Activated CD8-positive, alpha-beta T cell treated with anti-CD3 and anti-CD28 coated beads, Interleukin-2, amount 10 ng/mL, durations not matched to agents 7 days and 5 days (primary cell): ENCODE measurements at regions of chr11 and their contacts with region 1.

Region 1: GRCh38 chr11:34357701-34358257 is at the start of gene ABTB2:
- DNase-seq: peak; percentile 99
- ATAC-seq: peak; percentile 91
- H3K4me3 Mint-ChIP-seq: peak within 1 kb of the TSS; percentile 78
- H3K27ac Mint-ChIP-seq: peak within 1 kb of the TSS; percentile 74
- H3K4me1 Mint-ChIP-seq: peaks cover 32% of the 10 kb centered on the region
- H3K27me3 Mint-ChIP-seq: peaks cover 44% of the 10 kb centered on the region
- total RNA-seq, gene ABTB2: 0.97 TPM

Region 2: GRCh38 chr11:33996498-33997454 is 361.0 kb before region 1 on chr11:
- CTCF ChIA-PET with region 1: interaction called, 11 read pairs
- POLR2A ChIA-PET with region 1: no interaction called
- DNase-seq: peak; percentile 85
- ATAC-seq: peak; percentile 98
- H3K4me3 Mint-ChIP-seq: no peak overlapping the region
- H3K27ac Mint-ChIP-seq: no peak overlapping the region
- H3K4me1 Mint-ChIP-seq: peaks cover 13% of the 10 kb centered on the region
- H3K27me3 Mint-ChIP-seq: peaks cover 23% of the 10 kb centered on the region

Region 3: DNA sequence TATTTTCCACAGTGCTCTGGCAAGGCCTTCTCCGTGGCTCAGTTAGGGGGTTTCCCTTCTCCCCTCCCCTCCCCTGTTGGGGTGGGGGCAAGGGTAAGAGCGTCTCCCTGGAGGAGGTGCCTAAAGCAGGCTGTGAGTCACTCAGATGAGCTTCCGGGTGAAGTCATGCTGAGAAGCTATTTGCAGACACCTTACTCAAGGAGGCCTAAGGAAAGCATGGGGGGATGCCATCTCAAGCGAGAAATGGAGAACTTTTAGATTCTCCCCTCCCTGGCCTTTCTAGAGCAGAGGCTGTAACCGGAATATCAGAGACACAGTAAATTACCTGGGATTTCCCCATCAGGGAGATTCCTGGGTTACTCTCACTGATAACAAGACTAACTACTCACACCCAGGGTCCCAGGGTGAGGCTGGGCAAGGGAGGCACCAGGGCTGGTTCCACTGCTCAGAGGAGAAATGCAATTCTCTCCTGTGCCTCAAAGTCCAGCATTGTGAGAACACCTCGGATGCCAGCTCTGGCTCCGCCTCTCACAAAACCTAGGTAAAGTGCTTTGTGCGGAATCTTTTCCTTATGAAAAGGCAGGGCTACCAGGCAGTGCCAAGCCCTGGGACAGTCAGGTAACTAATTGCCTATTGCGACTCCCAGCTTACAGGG is 123.6 kb before region 1 on chr11:
- CTCF ChIA-PET with region 1: interaction called, 10 read pairs
- POLR2A ChIA-PET with region 1: interaction called, 3 read pairs
- DNase-seq: peak; percentile 80
- ATAC-seq: peak; percentile 95
- H3K4me3 Mint-ChIP-seq: no peak overlapping the region
- H3K27ac Mint-ChIP-seq: peak overlapping the region; percentile 72
- H3K4me1 Mint-ChIP-seq: peaks cover 29% of the 10 kb centered on the region
- H3K27me3 Mint-ChIP-seq: no peaks in the 10 kb centered on the region

Region 4: DNA sequence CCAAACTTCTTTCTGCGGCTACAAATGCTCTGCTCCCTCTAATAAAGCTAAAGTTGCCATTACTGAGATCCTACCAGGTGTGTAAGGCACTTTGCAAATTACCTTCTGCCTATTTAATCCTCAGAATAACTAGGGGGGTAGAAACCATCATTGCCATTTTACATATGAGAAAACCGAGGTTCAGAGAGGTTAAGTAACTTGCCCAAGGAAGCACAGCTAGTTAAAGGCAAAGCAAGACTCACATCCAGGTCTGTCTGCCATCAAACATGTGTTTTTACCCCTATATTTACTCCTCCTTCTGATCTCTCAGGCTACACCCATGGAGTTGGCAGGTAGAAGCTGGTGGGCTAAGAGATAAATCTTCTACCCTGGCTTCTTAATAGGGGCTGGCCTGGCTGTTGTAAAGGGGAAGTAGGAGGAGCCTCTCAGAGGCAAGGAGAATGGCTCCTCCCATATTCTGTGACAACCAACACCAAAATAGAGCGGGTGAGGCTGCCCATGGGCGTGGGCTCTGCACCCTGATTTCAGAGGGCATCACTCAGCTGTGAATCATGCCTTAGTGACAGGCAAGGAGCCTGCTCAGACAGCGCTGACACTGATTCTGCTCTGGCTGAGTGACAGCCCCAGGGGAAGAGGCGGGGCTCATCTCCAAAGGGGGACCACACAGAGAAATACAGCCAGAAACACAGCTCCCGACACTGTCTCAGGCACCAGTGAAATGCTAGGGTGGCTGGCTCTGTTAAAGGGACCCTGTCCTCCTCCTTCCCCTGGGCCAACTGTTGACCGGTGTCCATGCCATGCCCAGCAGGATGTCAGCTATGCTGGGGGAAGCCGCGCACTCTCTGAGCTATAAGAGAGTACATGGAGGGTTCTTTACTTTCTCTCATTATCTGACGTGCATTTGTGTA is 106.8 kb before region 1 on chr11:
- CTCF ChIA-PET with region 1: interaction called, 15 read pairs
- POLR2A ChIA-PET with region 1: interaction called, 3 read pairs
- DNase-seq: peak; percentile 81
- ATAC-seq: peak; percentile 91
- H3K4me3 Mint-ChIP-seq: peak overlapping the region; percentile 25
- H3K27ac Mint-ChIP-seq: peak overlapping the region; percentile 78
- H3K4me1 Mint-ChIP-seq: peaks cover 59% of the 10 kb centered on the region
- H3K27me3 Mint-ChIP-seq: no peaks in the 10 kb centered on the region

Region 5: DNA sequence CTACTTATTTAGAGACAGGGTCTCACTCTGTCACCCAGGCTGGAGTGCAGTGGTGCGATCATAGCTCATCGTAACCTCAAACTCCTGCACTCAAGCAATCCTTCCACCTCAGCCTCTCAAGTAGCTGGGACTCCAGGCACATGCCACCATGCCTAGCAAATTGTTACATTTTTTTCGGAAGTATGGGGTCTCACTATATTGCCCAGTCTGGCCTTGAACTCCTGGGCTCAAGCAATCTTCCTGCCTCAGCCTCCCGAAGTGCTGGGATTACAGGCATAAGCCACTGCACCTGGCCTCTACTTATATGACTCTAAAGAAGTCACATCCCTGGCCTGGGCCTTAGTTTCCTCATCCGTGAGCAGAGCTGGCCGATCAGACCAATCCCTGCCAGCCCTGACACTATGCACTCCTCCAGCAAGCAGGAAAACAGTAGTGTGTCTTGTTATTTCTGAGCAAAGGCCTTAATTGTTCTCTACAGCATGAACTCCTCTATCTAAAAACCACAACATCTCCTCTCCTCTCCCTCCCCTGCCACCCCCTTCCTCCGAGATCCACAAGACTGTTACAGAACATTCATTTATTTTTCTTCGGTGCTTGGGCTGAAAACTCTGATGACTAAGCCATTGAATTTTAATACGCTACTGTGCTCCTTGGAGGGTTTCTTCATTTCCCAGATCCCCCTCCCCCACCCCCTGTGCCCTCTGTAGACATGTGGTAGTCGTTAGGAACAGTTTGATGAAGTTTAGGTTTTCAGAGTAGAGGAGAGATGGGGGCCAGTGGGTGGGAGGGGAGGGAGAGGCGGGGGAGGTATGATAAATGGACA is 91.5 kb before region 1 on chr11:
- CTCF ChIA-PET with region 1: no interaction called
- POLR2A ChIA-PET with region 1: no interaction called
- DNase-seq: no peak
- ATAC-seq: no peak
- H3K4me3 Mint-ChIP-seq: no peak overlapping the region
- H3K27ac Mint-ChIP-seq: peak overlapping the region; percentile 43
- H3K4me1 Mint-ChIP-seq: peaks cover 18% of the 10 kb centered on the region
- H3K27me3 Mint-ChIP-seq: peaks cover 12% of the 10 kb centered on the region

Region 6: DNA sequence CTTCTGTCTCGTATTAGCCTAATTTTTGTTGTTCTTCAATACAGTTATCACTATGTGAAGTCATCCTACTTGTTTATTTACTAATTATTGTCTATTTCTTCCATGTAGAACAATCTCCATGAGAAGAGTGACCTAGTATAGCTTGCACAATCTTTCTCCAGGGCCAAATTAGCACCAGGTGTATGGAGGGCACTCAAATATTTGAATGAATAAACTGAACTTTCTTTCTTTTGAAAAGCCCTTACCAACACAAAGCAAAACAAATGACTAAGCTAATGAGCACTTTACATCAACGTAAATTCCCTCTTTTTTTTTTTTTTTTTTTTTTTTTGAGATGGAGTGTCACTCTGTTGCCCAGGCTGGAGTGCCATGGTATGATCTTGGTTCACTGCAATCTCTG is 34.2 kb before region 1 on chr11:
- CTCF ChIA-PET with region 1: no interaction called
- POLR2A ChIA-PET with region 1: no interaction called
- DNase-seq: no peak
- ATAC-seq: no peak
- H3K4me3 Mint-ChIP-seq: no peak overlapping the region
- H3K27ac Mint-ChIP-seq: no peak overlapping the region
- H3K4me1 Mint-ChIP-seq: no peaks in the 10 kb centered on the region
- H3K27me3 Mint-ChIP-seq: peaks cover 3% of the 10 kb centered on the region

Region 7: GRCh38 chr11:34344768-34345539 is 12.8 kb before region 1 on chr11:
- CTCF ChIA-PET with region 1: interaction called, 46 read pairs
- POLR2A ChIA-PET with region 1: interaction called, 4 read pairs
- DNase-seq: no peak
- ATAC-seq: no peak
- H3K4me3 Mint-ChIP-seq: no peak overlapping the region
- H3K27ac Mint-ChIP-seq: no peak overlapping the region
- H3K4me1 Mint-ChIP-seq: peaks cover 21% of the 10 kb centered on the region
- H3K27me3 Mint-ChIP-seq: peaks cover 8% of the 10 kb centered on the region